ENCODE measurements at regions of chr3 and their contacts with region 1.

Region 1: GRCh38 chr3:112642912-112643506 is 2.1 kb upstream of the CCDC80 start:
- DNase-seq: peak; percentile 51 to 80 (median 72)
- ATAC-seq: peak; percentile 97
- H3K4me3 ChIP-seq: peak overlapping the region; percentile 39
- H3K4me3 Mint-ChIP-seq: peak overlapping the region; percentile 6 to 81 (median 66)
- H3K27ac ChIP-seq: no peak overlapping the region
- H3K27ac Mint-ChIP-seq: peak overlapping the region in 2 of 9 donors; percentile 41 to 57
- H3K4me1 ChIP-seq: peaks cover 0 to 14% of the 10 kb centered on the region in 2 donors
- H3K4me1 Mint-ChIP-seq: peaks cover 7 to 24% (median 9%) of the 10 kb centered on the region in 7 donors
- H3K27me3 ChIP-seq: no peaks in the 10 kb centered on the region
- H3K27me3 Mint-ChIP-seq: peaks cover 0 to 16% (median 11%) of the 10 kb centered on the region in 5 donors

Region 2: GRCh38 chr3:111851511-111851954 is 791.5 kb before region 1 on chr3:
- CTCF ChIA-PET with region 1: no interaction called
- POLR2A ChIA-PET with region 1: no interaction called
- intact Hi-C with region 1: no loop called
- DNase-seq: no peak
- ATAC-seq: peak; percentile 24
- H3K4me3 ChIP-seq: no peak overlapping the region
- H3K4me3 Mint-ChIP-seq: peak overlapping the region in 1 of 10 donors; percentile 9
- H3K27ac ChIP-seq: no peak overlapping the region
- H3K27ac Mint-ChIP-seq: no peak overlapping the region
- H3K4me1 ChIP-seq: no peaks in the 10 kb centered on the region
- H3K4me1 Mint-ChIP-seq: peaks cover 4 to 10% (median 7%) of the 10 kb centered on the region in 7 donors
- H3K27me3 ChIP-seq: no peaks in the 10 kb centered on the region
- H3K27me3 Mint-ChIP-seq: peaks cover 6 to 19% (median 16%) of the 10 kb centered on the region in 5 donors

Region 3: DNA sequence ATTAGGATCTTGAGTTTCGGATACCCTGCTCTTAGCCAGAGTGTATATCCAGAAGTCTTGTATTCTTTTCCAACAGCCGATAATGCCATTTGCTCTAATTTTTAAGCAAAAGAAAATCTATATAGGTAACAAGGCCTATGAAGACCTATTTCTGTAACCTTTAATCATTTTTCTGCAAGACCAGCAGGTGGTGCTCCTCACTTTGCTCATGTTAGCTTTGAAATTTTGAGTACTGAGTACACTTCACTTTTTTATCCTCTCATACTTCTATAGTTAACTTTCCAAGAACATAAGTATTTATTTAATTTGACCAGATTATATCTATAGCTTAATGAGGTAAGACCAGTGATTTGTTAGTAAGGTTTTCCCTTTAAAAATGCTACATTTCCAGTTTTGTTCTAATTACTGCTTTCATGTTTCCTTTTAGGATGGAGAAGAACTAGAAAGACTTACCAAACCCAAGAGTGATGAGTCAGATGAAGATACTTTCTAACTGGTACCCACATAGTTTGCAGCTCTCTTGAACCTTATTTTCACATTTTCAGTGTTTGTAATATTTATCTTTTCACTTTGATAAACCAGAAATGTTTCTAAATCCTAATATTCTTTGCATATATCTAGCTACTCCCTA is 60.6 kb before region 1 on chr3:
- CTCF ChIA-PET with region 1: no interaction called
- POLR2A ChIA-PET with region 1: no interaction called
- intact Hi-C with region 1: loop called in 1 of 2 experiments (anchors 1 kb)
- DNase-seq: peak in 5 of 9 donors; percentile 8 to 39 (median 22)
- ATAC-seq: peak; percentile 60
- H3K4me3 ChIP-seq: no peak overlapping the region
- H3K4me3 Mint-ChIP-seq: no peak overlapping the region
- H3K27ac ChIP-seq: no peak overlapping the region
- H3K27ac Mint-ChIP-seq: no peak overlapping the region
- H3K4me1 ChIP-seq: no peaks in the 10 kb centered on the region
- H3K4me1 Mint-ChIP-seq: peaks cover 0 to 4% (median under 1%) of the 10 kb centered on the region in 7 donors
- H3K27me3 ChIP-seq: no peaks in the 10 kb centered on the region
- H3K27me3 Mint-ChIP-seq: no peaks in the 10 kb centered on the region

Region 4: GRCh38 chr3:112699436-112699978 is 56.5 kb after region 1 on chr3:
- CTCF ChIA-PET with region 1: no interaction called
- POLR2A ChIA-PET with region 1: no interaction called
- intact Hi-C with region 1: loop called in 1 of 2 experiments (anchors 5 kb)
- DNase-seq: no peak
- ATAC-seq: no peak
- H3K4me3 ChIP-seq: no peak overlapping the region
- H3K4me3 Mint-ChIP-seq: no peak overlapping the region
- H3K27ac ChIP-seq: no peak overlapping the region
- H3K27ac Mint-ChIP-seq: no peak overlapping the region
- H3K4me1 ChIP-seq: no peaks in the 10 kb centered on the region
- H3K4me1 Mint-ChIP-seq: no peaks in the 10 kb centered on the region
- H3K27me3 ChIP-seq: no peaks in the 10 kb centered on the region
- H3K27me3 Mint-ChIP-seq: peaks cover 9 to 37% (median 25%) of the 10 kb centered on the region in 5 donors

Region 5: GRCh38 chr3:112973325-112974177 is 330.5 kb after region 1 on chr3:
- CTCF ChIA-PET with region 1: interaction called, 13 read pairs
- POLR2A ChIA-PET with region 1: no interaction called
- intact Hi-C with region 1: loop called in 1 of 2 experiments (anchors 1 kb)
- DNase-seq: peak in 8 of 9 donors; percentile 31 to 64 (median 52)
- ATAC-seq: peak; percentile 87
- H3K4me3 ChIP-seq: peak overlapping the region; percentile 72
- H3K4me3 Mint-ChIP-seq: peak overlapping the region; percentile 83 to 98 (median 94)
- H3K27ac ChIP-seq: peak overlapping the region; percentile 80
- H3K27ac Mint-ChIP-seq: peak overlapping the region; percentile 86 to 97 (median 95)
- H3K4me1 ChIP-seq: peaks cover 28 to 43% of the 10 kb centered on the region in 2 donors
- H3K4me1 Mint-ChIP-seq: peaks cover 56 to 88% (median 74%) of the 10 kb centered on the region in 7 donors
- H3K27me3 ChIP-seq: no peaks in the 10 kb centered on the region
- H3K27me3 Mint-ChIP-seq: no peaks in the 10 kb centered on the region

Region 6: GRCh38 chr3:113051302-113051711 is 408.3 kb after region 1 on chr3:
- CTCF ChIA-PET with region 1: no interaction called
- POLR2A ChIA-PET with region 1: no interaction called
- intact Hi-C with region 1: loop called in 1 of 2 experiments (anchors 1 kb)
- DNase-seq: peak; percentile 65 to 86 (median 77)
- ATAC-seq: peak; percentile 99
- H3K4me3 ChIP-seq: no peak overlapping the region
- H3K4me3 Mint-ChIP-seq: no peak overlapping the region
- H3K27ac ChIP-seq: no peak overlapping the region
- H3K27ac Mint-ChIP-seq: no peak overlapping the region
- H3K4me1 ChIP-seq: peaks cover 0 to 4% of the 10 kb centered on the region in 2 donors
- H3K4me1 Mint-ChIP-seq: peaks cover 0 to 18% (median 14%) of the 10 kb centered on the region in 7 donors
- H3K27me3 ChIP-seq: no peaks in the 10 kb centered on the region
- H3K27me3 Mint-ChIP-seq: no peaks in the 10 kb centered on the region

Region 7: GRCh38 chr3:113575206-113575605 is 932.2 kb after region 1 on chr3:
- CTCF ChIA-PET with region 1: interaction called, 5 read pairs
- POLR2A ChIA-PET with region 1: no interaction called
- intact Hi-C with region 1: loop called in 1 of 2 experiments (anchors 1 kb)
- DNase-seq: no peak
- ATAC-seq: no peak
- H3K4me3 ChIP-seq: no peak overlapping the region
- H3K4me3 Mint-ChIP-seq: no peak overlapping the region
- H3K27ac ChIP-seq: no peak overlapping the region
- H3K27ac Mint-ChIP-seq: peak overlapping the region in 8 of 9 donors; percentile 10 to 79 (median 66)
- H3K4me1 ChIP-seq: no peaks in the 10 kb centered on the region
- H3K4me1 Mint-ChIP-seq: peaks cover 3 to 21% (median 13%) of the 10 kb centered on the region in 7 donors
- H3K27me3 ChIP-seq: no peaks in the 10 kb centered on the region
- H3K27me3 Mint-ChIP-seq: no peaks in the 10 kb centered on the region